B cell (primary cell): ENCODE measurements at regions of chr10 and their contacts with region 1.

Region 1: DNA sequence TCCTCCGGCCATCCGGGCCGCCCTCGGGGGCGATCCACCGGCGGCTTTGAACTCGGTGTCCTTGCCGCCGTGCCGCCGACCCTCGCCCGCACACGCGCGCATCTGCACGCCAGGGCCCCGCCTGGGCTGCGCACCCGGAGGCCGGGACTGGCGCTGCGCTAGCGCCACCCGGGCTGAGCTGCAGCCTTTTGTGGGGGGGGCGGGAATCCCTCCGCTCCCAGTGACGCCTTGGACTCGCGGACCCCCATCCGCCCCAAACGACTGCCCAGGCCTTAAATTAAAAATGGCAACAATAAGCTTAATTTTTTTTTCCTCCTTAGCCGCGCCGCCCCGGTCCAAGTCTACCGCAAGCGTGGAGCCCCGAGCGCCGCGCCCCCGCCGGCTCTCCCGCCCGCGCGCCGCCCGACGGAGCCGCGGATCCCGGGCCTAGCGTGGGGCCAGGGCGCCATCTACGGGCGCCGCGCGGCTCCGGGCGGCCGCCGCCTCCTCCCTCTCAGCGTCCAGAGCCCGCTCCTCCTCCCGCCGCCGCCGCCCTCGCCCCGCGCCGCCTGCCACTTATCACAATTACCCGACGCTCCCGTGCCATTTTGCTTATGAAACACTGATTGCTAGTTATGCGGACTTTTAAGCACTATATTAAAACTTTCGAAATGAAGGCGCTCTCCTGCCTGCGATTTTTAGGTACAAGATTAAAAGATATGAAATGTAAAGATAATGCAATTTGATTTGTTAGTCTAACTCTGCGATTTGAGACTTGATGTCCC is 7.5 kb upstream of the EBF3 start:
- DNase-seq: peak; percentile 43
- ATAC-seq: peak; percentile 39
- H3K4me3 ChIP-seq: no peak overlapping the region
- H3K4me3 Mint-ChIP-seq: peak overlapping the region; percentile 52
- H3K27ac ChIP-seq: no peak overlapping the region
- H3K27ac Mint-ChIP-seq: peak overlapping the region; percentile 12
- H3K4me1 ChIP-seq: peaks cover 11 to 49% of the 10 kb centered on the region in 2 donors
- H3K4me1 Mint-ChIP-seq: peaks cover 13% of the 10 kb centered on the region
- H3K27me3 ChIP-seq: peaks cover 0 to 83% (median 63%) of the 10 kb centered on the region in 4 experiments
- H3K27me3 Mint-ChIP-seq: peaks cover 50% of the 10 kb centered on the region
- CTCF ChIP-seq: peak; percentile 22

Region 2: DNA sequence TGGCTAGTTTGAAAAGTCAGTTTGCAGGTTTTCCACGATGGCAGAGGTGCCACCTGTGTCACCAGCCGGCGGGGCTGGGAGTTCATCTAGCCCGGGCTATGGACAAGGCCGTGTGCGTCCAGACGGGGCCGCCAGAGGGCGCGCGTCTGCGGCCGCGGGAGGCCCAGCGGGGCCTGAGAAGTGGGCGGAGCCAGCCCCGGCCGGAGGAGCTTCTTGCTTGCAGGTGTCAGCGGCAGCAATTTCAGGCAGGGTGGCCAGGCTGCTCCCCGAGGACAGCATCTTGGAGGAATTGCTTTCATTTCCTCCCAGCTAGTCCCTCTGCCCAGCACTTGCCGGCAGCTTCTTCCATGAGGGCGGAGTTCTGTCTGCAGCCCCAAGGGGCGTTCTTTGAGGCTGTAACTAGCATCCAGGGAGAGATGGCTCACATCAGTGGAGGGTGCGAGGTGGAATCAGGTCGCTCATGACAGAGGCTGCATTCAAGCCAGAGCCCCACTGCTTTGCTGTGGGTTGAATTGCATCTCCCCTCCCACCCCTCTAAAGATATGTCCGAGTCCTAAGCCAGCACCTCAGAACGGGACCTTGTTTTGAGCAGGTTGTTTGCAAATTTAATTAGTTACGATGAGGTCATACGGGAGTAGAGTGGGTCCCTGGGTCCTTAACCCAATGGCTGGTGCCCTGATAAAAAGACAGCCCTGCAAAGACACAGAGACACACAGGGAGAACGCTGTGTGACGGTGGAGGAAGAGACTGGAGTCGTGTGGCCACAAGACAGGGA is 1759.4 kb before region 1 on chr10:
- CTCF ChIA-PET with region 1: no interaction called
- POLR2A ChIA-PET with region 1: no interaction called
- intact Hi-C with region 1: loop called (anchors 5 kb)
- DNase-seq: peak; percentile 89
- ATAC-seq: peak; percentile 87
- H3K4me3 ChIP-seq: no peak overlapping the region
- H3K4me3 Mint-ChIP-seq: peak overlapping the region; percentile 82
- H3K27ac ChIP-seq: no peak overlapping the region
- H3K27ac Mint-ChIP-seq: peak overlapping the region; percentile 78
- H3K4me1 ChIP-seq: peaks cover 8 to 12% of the 10 kb centered on the region in 2 donors
- H3K4me1 Mint-ChIP-seq: peaks cover 12% of the 10 kb centered on the region
- H3K27me3 ChIP-seq: peaks cover 0 to 13% (median 0%) of the 10 kb centered on the region in 4 experiments
- H3K27me3 Mint-ChIP-seq: peaks cover 23% of the 10 kb centered on the region
- CTCF ChIP-seq: peak; percentile 89

Region 3: DNA sequence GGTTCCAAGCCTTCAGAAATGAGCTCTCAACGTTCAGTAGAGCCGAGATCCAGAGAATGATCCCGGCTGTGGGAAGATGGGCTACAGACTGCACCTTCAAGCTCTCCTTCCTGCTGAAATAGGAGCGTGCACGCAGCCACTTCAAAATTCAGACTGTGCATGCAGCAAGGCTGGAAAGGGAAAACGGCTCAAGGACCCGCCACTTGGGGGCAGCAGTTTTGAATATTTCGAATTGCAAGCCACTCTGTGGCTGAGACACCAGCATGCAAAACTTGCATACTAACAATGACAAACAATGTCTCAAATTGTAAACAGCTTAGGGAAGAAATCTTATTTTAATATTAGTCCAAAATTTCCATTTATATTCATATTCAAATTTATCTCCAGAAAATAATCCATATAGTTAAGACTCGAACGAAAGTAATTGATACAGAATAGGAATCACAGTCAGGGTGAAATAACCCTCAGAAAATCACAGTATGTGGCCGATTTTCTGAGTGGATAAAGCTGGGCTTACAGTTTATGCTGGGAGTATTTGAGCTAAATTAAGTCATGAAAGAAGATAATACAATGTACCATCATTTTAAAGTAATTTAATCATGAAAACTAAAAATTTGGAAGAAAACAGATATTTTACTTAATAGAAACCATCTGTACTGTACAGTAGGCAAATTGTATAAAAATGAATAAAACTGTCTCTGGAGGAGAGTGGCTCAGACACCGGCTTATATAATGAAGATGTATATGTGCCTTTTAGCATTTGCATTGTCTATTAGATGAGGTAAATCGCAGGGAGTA is 1707.5 kb before region 1 on chr10:
- CTCF ChIA-PET with region 1: interaction called, 3 read pairs
- POLR2A ChIA-PET with region 1: no interaction called
- intact Hi-C with region 1: loop called (anchors 10 kb)
- DNase-seq: peak; percentile 28
- ATAC-seq: no peak
- H3K4me3 ChIP-seq: no peak overlapping the region
- H3K4me3 Mint-ChIP-seq: no peak overlapping the region
- H3K27ac ChIP-seq: no peak overlapping the region
- H3K27ac Mint-ChIP-seq: no peak overlapping the region
- H3K4me1 ChIP-seq: no peaks in the 10 kb centered on the region
- H3K4me1 Mint-ChIP-seq: no peaks in the 10 kb centered on the region
- H3K27me3 ChIP-seq: peaks cover 0 to 37% (median 5%) of the 10 kb centered on the region in 4 experiments
- H3K27me3 Mint-ChIP-seq: peaks cover 41% of the 10 kb centered on the region
- CTCF ChIP-seq: peak; percentile 62

Region 4: DNA sequence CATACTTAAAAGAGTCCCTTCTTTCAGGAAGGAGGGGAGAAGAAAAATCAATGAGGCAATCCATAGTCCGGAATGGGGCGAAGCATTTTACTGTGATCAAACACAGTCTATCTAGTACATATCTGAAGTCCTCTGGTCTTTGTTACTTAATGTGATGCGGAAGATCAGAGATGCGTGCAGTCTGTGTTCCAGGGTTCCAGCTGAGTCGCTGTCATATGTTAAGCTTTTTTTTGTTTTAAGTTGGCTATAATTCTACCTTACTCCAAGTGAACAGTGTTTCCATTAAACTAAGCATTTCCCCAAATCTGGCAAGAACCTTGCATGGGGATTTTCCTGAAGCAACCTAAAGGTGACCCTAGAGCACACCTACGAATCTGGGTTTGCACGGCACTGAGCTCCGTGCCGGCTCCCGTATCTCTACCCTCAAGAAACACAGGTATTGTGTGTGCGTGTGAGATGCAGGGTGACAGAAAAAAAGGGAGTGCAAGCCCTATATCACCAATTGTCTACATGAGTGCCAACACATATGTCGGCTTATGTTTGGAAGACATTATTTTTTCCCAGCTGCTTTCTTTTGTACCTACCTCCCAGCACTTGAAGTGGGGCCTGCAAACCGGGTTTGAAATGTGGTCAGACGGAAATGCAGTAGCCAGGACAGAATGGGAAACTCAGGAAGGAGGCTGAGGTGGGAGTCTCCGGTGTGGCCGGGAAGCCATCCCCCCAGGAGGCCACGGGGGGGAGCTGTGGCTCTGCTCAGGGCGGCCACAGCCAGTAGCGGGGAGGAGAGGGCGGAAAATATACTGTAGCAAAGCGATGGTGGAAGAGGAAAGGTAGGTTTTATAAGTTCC is 940.3 kb before region 1 on chr10:
- CTCF ChIA-PET with region 1: interaction called, 18 read pairs
- POLR2A ChIA-PET with region 1: no interaction called
- intact Hi-C with region 1: no loop called
- DNase-seq: peak; percentile 21
- ATAC-seq: peak; percentile 67
- H3K4me3 ChIP-seq: no peak overlapping the region
- H3K4me3 Mint-ChIP-seq: no peak overlapping the region
- H3K27ac ChIP-seq: no peak overlapping the region
- H3K27ac Mint-ChIP-seq: no peak overlapping the region
- H3K4me1 ChIP-seq: peaks cover 7 to 9% of the 10 kb centered on the region in 2 donors
- H3K4me1 Mint-ChIP-seq: peaks cover 8% of the 10 kb centered on the region
- H3K27me3 ChIP-seq: peaks cover 0 to 17% (median 1%) of the 10 kb centered on the region in 4 experiments
- H3K27me3 Mint-ChIP-seq: peaks cover 31% of the 10 kb centered on the region
- CTCF ChIP-seq: peak; percentile 50

Region 5: DNA sequence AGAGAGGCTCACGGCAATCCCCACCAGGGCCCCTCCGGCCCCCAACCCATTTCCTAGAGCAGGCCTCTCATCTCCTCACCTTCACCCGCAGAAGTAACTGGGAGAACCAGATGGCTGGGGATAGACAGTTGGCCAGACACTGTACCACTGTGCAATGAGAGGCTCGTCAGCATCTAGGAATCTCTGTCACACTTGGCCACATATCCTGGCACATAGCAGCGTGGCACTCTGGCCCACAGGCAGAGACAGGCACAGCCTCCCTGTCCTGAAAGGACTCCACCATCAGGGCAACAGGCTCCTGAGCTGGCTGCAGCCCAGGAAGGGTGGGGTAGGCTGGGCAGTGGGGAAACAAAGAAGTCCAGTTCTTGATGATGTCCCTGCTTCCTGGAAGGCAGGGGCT is 93.2 kb after region 1 on chr10:
- CTCF ChIA-PET with region 1: no interaction called
- POLR2A ChIA-PET with region 1: no interaction called
- intact Hi-C with region 1: no loop called
- DNase-seq: no peak
- ATAC-seq: no peak
- H3K4me3 ChIP-seq: no peak overlapping the region
- H3K4me3 Mint-ChIP-seq: no peak overlapping the region
- H3K27ac ChIP-seq: no peak overlapping the region
- H3K27ac Mint-ChIP-seq: no peak overlapping the region
- H3K4me1 ChIP-seq: no peaks in the 10 kb centered on the region
- H3K4me1 Mint-ChIP-seq: no peaks in the 10 kb centered on the region
- H3K27me3 ChIP-seq: no peaks in the 10 kb centered on the region
- H3K27me3 Mint-ChIP-seq: no peaks in the 10 kb centered on the region
- CTCF ChIP-seq: no peak